HepG2 (cell line): ENCODE measurements at regions of chr2 and their contacts with region 1.

Region 1: GRCh38 chr2:100780203-100781008 is 39.5 kb upstream of the NPAS2 start:
- DNase-seq: peak; percentile 100
- ATAC-seq: peak; percentile 90
- H3K4me3 ChIP-seq: peak overlapping the region in 2 of 3 experiments; percentile 36 to 68; a peak in 4 of 6 replicates
- H3K27ac ChIP-seq: peak overlapping the region; percentile 100
- H3K4me1 ChIP-seq: peaks cover 84% of the 10 kb centered on the region
- H3K27me3 ChIP-seq: no peaks in the 10 kb centered on the region
- CTCF ChIP-seq: peak; percentile 37
- EP300 ChIP-seq: peak; percentile 87 to 99
- POLR2A ChIP-seq: peak; percentile 64 to 85
- RAD21 ChIP-seq: peak; percentile 40; the same call in 1 of the 2 replicates

Region 2: GRCh38 chr2:100752628-100753333 is 27.6 kb before region 1 on chr2:
- CTCF ChIA-PET with region 1: no interaction called
- POLR2A ChIA-PET with region 1: interaction called, 11 read pairs
- in situ Hi-C with region 1: no loop called
- intact Hi-C with region 1: no loop called
- DNase-seq: peak; percentile 67
- ATAC-seq: no peak; the same call in 2 of the 3 replicates
- H3K4me3 ChIP-seq: no peak overlapping the region
- H3K27ac ChIP-seq: no peak overlapping the region
- H3K4me1 ChIP-seq: peaks cover 27% of the 10 kb centered on the region
- H3K27me3 ChIP-seq: peaks cover 0 to 39% of the 10 kb centered on the region in 2 experiments; a peak in 3 of 5 replicates
- CTCF ChIP-seq: no peak
- EP300 ChIP-seq: peak in 1 of 2 experiments; percentile 8; a peak in 1 of 4 replicates
- POLR2A ChIP-seq: no peak
- RAD21 ChIP-seq: no peak

Region 3: GRCh38 chr2:100793982-100794381 is 13.6 kb after region 1 on chr2:
- CTCF ChIA-PET with region 1: no interaction called
- POLR2A ChIA-PET with region 1: interaction called, 24 read pairs
- in situ Hi-C with region 1: no loop called
- intact Hi-C with region 1: loop called (anchors 2 kb)
- DNase-seq: no peak
- ATAC-seq: peak; percentile 32
- H3K4me3 ChIP-seq: 0 out of 6 replicates have a peak overlapping the region, but pooled peaks of 1 of the 3 experiments have one; percentile 36
- H3K27ac ChIP-seq: no peak overlapping the region
- H3K4me1 ChIP-seq: peaks cover 71% of the 10 kb centered on the region
- H3K27me3 ChIP-seq: no peaks in the 10 kb centered on the region
- CTCF ChIP-seq: 0 out of 2 replicates have a peak, but pooled peaks have one; percentile 6
- EP300 ChIP-seq: no peak
- POLR2A ChIP-seq: no peak
- RAD21 ChIP-seq: no peak

Region 4: GRCh38 chr2:100870652-100871531 is 90.5 kb after region 1 on chr2:
- CTCF ChIA-PET with region 1: no interaction called
- POLR2A ChIA-PET with region 1: interaction called, 11 read pairs
- in situ Hi-C with region 1: no loop called
- intact Hi-C with region 1: no loop called
- DNase-seq: peak; percentile 80
- ATAC-seq: peak; percentile 66
- H3K4me3 ChIP-seq: no peak overlapping the region
- H3K27ac ChIP-seq: peak overlapping the region; percentile 24
- H3K4me1 ChIP-seq: peaks cover 56% of the 10 kb centered on the region
- H3K27me3 ChIP-seq: no peaks in the 10 kb centered on the region
- CTCF ChIP-seq: peak; percentile 62
- EP300 ChIP-seq: peak in 1 of 2 experiments; percentile 31; a peak in 1 of 4 replicates
- POLR2A ChIP-seq: no peak
- RAD21 ChIP-seq: peak; percentile 46; the same call in 1 of the 2 replicates